ENCODE measurements at regions of chr2 and their contacts with region 1.

Region 1: DNA sequence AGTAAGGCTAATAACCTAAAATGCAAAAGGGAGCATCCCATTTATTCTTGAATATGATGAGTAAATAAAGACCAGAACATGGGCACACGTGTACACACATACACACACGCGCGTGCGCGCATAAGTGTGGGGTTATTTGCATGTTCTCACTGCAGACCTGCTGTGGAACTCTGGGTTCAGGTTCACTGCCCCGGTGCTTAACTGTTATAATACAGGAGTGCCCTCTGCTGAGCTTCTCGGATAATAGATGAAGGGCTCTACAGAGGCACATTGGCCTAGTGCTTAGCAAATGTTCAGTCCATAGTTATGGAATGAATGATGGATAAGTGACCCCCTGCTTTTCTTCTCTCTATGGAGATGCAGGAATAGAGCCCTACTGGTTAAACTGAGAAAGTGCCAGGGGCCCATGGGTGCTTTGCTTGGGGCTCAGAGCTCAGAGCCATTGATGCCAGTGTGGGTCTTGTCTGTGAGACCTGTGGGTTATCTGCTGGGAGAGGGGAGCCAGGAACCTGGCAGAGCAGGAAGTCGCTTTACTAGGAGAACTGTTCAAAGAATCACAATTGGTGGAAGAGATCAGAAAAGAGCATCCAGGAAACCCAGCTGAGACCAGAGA is 3.6 kb upstream of the ARL4C start:
- DNase-seq: peak in 2 of 10 donors; percentile 41 to 79

Region 2: DNA sequence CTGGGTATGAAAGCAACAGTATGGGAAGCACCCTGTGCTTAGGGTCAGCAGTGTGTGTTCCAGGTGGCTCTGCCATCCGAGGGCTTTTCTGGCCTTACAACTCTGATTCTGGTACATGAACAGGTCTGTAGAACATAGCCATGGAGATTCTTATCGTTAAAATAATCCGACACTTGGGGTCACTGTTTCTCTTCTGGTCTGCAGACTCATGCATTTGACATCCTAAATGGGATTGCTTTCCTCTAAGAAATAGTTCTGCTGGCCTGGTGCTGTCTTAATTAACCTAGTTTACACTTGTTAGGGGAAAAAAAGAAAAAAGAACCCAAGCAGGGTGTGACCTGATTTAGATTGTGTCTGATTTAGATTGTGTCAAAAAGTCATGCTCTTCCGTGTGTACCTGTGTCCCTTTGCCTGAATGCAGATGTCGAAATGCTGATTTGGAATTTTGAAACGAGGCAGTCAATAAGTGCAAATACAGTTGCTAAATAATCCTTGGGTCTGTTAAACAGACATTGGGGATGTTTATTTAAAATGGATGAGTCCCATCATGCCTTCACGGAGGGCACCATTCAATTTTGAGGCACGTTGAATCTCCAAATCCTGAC is 523.7 kb before region 1 on chr2:
- intact Hi-C with region 1: loop called (anchors 2 kb)
- DNase-seq: no peak

Region 3: DNA sequence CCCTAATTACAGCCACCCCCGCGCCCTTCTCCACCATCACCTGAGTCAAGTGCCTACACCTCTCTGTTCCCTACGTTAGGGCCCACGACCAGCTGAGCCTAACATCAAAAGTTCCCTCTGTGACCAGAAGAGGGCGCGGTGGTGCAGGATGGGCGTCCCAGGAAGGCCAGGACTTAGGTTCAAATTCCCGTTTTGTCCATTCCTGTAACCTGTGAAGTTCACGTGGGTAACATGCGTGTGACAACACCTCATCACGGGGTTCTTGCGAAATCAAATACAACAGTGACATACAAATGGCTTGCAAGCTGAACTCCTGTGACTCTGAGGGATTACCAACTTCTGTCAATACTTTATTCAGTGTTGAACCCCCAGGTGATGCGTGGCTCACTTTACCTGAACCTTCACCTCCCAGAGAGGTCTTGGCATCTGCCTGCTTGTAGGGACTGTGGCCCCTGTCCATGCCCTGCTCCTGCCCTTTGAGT is 211.5 kb before region 1 on chr2:
- intact Hi-C with region 1: loop called (anchors 1 kb)
- DNase-seq: peak in 9 of 10 donors; percentile 34 to 90 (median 65)

Region 4: DNA sequence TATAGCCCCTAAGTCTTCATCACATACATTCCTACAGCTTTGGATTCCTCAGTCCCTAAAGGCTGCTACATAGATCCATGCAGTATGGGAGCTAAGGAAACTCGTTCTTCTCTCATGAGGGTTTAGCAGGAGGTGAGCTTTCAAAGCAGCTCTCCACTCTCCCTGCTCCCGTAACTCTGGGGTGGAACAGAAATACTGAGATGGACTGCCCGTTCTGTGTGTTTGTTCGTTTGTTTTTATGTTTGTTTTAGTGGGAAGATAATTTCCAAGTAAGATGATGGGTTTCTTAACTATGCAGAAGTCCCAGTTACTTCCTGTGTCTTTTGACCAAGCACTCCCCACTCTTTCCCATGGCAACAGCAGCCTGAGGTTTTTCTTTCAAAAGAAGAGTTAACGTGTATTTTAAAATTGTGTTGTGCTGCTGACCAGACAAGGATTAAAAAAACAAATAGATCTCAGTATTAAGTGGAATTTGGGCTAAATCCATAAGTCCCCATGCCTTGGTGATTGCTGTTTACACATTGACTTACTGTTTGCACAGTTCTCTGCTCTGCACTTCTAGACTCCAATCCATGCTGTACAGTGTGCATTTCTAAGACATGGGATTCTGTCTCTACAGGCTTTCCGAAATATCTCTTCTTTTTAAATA is 294.9 kb after region 1 on chr2:
- intact Hi-C with region 1: no loop called
- DNase-seq: no peak

Measured in posterior cingulate gyrus (tissue), 11 donors.